ENCODE measurements at regions of chr19 and their contacts with region 1.

Region 1: GRCh38 chr19:2699413-2700140 is 2.9 kb downstream of the GNG7 start:
- DNase-seq: peak; percentile 61
- H3K4me3 ChIP-seq: peak overlapping the region; percentile 58
- H3K27ac ChIP-seq: peak overlapping the region; percentile 90
- H3K4me1 ChIP-seq: peaks cover 77% of the 10 kb centered on the region
- CTCF ChIP-seq: no peak

Region 2: GRCh38 chr19:2507109-2507508 is 192.5 kb before region 1 on chr19:
- CTCF ChIA-PET with region 1: no interaction called
- POLR2A ChIA-PET with region 1: no interaction called
- intact Hi-C with region 1: no loop called
- DNase-seq: peak; percentile 29
- H3K4me3 ChIP-seq: no peak overlapping the region
- H3K27ac ChIP-seq: no peak overlapping the region
- H3K4me1 ChIP-seq: peaks cover 11% of the 10 kb centered on the region
- CTCF ChIP-seq: no peak

Region 3: GRCh38 chr19:2663920-2664571 is 35.5 kb before region 1 on chr19:
- CTCF ChIA-PET with region 1: no interaction called
- POLR2A ChIA-PET with region 1: interaction called, 4 read pairs
- intact Hi-C with region 1: loop called (anchors 2 kb)
- DNase-seq: peak; percentile 75
- H3K4me3 ChIP-seq: no peak overlapping the region
- H3K27ac ChIP-seq: peak overlapping the region; percentile 31
- H3K4me1 ChIP-seq: peaks cover 34% of the 10 kb centered on the region
- CTCF ChIP-seq: peak; percentile 72

Region 4: GRCh38 chr19:2680808-2681207 is 18.8 kb before region 1 on chr19:
- CTCF ChIA-PET with region 1: no interaction called
- POLR2A ChIA-PET with region 1: interaction called, 3 read pairs
- intact Hi-C with region 1: loop called (anchors 2 kb)
- DNase-seq: peak; percentile 92
- H3K4me3 ChIP-seq: peak overlapping the region; percentile 45
- H3K27ac ChIP-seq: peak overlapping the region; percentile 78
- H3K4me1 ChIP-seq: peaks cover 37% of the 10 kb centered on the region
- CTCF ChIP-seq: no peak

Region 5: GRCh38 chr19:2840794-2841790 is 141.5 kb after region 1 on chr19 and contains the start of gene ZNF555:
- CTCF ChIA-PET with region 1: no interaction called
- POLR2A ChIA-PET with region 1: no interaction called
- intact Hi-C with region 1: no loop called
- DNase-seq: peak; percentile 100
- H3K4me3 ChIP-seq: peak within 1 kb of the TSS; percentile 73
- H3K27ac ChIP-seq: peak within 1 kb of the TSS; percentile 78
- H3K4me1 ChIP-seq: peaks cover 23% of the 10 kb centered on the region
- CTCF ChIP-seq: peak; percentile 61
- total RNA-seq, gene ZNF555: 2.4 and 2.8 TPM in 2 replicates

Measured in OCI-LY7 (cell line).